ENCODE measurements at regions of chr7 and their contacts with region 1.

Region 1: GRCh38 chr7:8217200-8218068 is 44.5 kb downstream of the ICA1 start:
- DNase-seq: peak in 1 of 5 donors; percentile 33
- ATAC-seq: peak in 2 of 4 donors; percentile 37 to 45
- H3K4me3 ChIP-seq: no peak overlapping the region
- H3K27ac ChIP-seq: no peak overlapping the region
- H3K4me1 ChIP-seq: peaks cover 0 to 24% (median 7%) of the 10 kb centered on the region in 12 donors
- H3K27me3 ChIP-seq: no peaks in the 10 kb centered on the region
- CTCF ChIP-seq: peak; percentile 47 to 90 (median 78)
- POLR2A ChIP-seq: no peak

Region 2: GRCh38 chr7:7424151-7424873 is 793.1 kb before region 1 on chr7:
- intact Hi-C with region 1: loop called in 4 of 10 experiments (anchors 10 kb)
- DNase-seq: peak; percentile 41 to 58 (median 55)
- ATAC-seq: peak; percentile 58 to 94 (median 86)
- H3K4me3 ChIP-seq: peak overlapping the region; percentile 14 to 65 (median 50)
- H3K27ac ChIP-seq: peak overlapping the region in 1 of 12 donors; percentile 11
- H3K4me1 ChIP-seq: peaks cover 0 to 11% (median 0%) of the 10 kb centered on the region in 12 donors
- H3K27me3 ChIP-seq: no peaks in the 10 kb centered on the region
- CTCF ChIP-seq: peak; percentile 52 to 82 (median 70)
- POLR2A ChIP-seq: no peak

Region 3: GRCh38 chr7:7595451-7595850 is 622.0 kb before region 1 on chr7:
- intact Hi-C with region 1: loop called in 8 of 10 experiments (anchors 5 to 10 kb)
- DNase-seq: no peak
- ATAC-seq: no peak
- H3K4me3 ChIP-seq: no peak overlapping the region
- H3K27ac ChIP-seq: no peak overlapping the region
- H3K4me1 ChIP-seq: peaks cover 0 to 10% (median 0%) of the 10 kb centered on the region in 12 donors
- H3K27me3 ChIP-seq: no peaks in the 10 kb centered on the region
- CTCF ChIP-seq: peak; percentile 14 to 63 (median 32)
- POLR2A ChIP-seq: no peak

Region 4: DNA sequence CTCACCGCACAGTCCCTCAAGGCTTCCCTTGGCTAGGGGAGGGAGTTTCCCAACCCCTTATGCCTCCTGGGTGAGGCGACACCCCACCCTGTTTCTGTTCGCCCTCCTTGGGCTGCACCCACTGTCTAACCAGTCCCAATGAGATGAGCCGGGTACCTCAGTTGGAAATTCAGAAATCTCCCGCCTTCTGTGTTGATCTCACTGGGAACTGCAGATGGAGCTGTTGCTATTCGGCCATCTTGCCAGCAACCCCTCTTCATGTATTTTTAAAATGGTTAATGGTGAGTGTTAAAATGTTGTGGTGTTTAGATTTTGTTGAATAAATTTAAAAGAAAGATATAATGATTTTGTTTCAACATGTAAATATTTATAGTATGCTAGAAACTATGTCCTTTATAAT is 554.9 kb before region 1 on chr7:
- intact Hi-C with region 1: loop called in 3 of 10 experiments (anchors 10 kb)
- DNase-seq: no peak
- ATAC-seq: no peak
- H3K4me3 ChIP-seq: no peak overlapping the region
- H3K27ac ChIP-seq: no peak overlapping the region
- H3K4me1 ChIP-seq: peaks cover 0 to 5% (median 0%) of the 10 kb centered on the region in 12 donors
- H3K27me3 ChIP-seq: no peaks in the 10 kb centered on the region
- CTCF ChIP-seq: peak in 10 of 12 donors; percentile 6 to 50 (median 36)
- POLR2A ChIP-seq: no peak

Region 5: GRCh38 chr7:7681179-7681935 is 536.1 kb before region 1 on chr7:
- intact Hi-C with region 1: loop called in 5 of 10 experiments (anchors 5 to 10 kb)
- DNase-seq: peak in 2 of 5 donors; percentile 61
- ATAC-seq: peak in 3 of 4 donors; percentile 77 to 91 (median 89)
- H3K4me3 ChIP-seq: peak overlapping the region in 4 of 12 donors; percentile 12 to 34 (median 15)
- H3K27ac ChIP-seq: peak overlapping the region; percentile 3 to 69 (median 35)
- H3K4me1 ChIP-seq: peaks cover 0 to 30% (median 21%) of the 10 kb centered on the region in 12 donors
- H3K27me3 ChIP-seq: no peaks in the 10 kb centered on the region
- CTCF ChIP-seq: peak; percentile 47 to 82 (median 71)
- POLR2A ChIP-seq: no peak

Region 6: DNA sequence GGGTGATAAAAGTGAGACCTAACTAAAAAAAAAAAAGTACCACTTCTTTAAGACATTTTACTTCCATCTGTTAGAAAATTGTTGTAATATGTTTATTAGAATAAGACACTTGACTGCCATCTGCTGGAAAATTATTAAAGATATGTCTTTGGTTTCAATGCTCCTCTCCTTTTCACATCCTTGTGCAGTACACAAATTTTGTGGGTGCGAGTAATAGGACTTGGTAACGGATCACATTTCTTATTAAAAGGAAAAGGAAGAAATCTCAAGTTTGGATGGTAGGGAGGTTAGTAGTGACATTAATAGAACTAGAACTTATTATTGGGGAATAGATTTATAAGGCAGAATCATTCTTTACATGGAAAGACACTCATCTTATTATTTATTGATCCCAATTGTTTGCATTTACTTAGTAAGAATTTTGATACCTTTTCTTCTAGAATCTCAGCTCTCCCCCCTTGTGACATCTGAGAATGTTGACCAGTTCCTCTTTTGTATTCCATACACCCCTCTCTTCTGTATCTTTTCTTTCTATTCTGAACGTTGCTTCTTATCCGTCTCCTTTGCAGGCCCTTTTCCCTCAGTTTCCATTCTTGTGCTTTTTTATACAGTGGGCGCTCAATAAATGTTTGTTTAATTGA is 456.0 kb before region 1 on chr7:
- intact Hi-C with region 1: loop called in 5 of 10 experiments (anchors 5 to 10 kb)
- DNase-seq: no peak
- ATAC-seq: peak; percentile 33 to 66 (median 52)
- H3K4me3 ChIP-seq: peak overlapping the region in 10 of 12 donors; percentile 39 to 61 (median 52)
- H3K27ac ChIP-seq: peak overlapping the region in 11 of 12 donors; percentile 9 to 80 (median 68)
- H3K4me1 ChIP-seq: peaks cover 0 to 17% (median 8%) of the 10 kb centered on the region in 12 donors
- H3K27me3 ChIP-seq: no peaks in the 10 kb centered on the region
- CTCF ChIP-seq: peak; percentile 36 to 67 (median 54)
- POLR2A ChIP-seq: no peak

Region 7: GRCh38 chr7:7959979-7960670 is 257.3 kb before region 1 on chr7:
- intact Hi-C with region 1: no loop called
- DNase-seq: no peak
- ATAC-seq: no peak
- H3K4me3 ChIP-seq: no peak overlapping the region
- H3K27ac ChIP-seq: no peak overlapping the region
- H3K4me1 ChIP-seq: no peaks in the 10 kb centered on the region
- H3K27me3 ChIP-seq: no peaks in the 10 kb centered on the region
- CTCF ChIP-seq: no peak
- POLR2A ChIP-seq: no peak

Region 8: DNA sequence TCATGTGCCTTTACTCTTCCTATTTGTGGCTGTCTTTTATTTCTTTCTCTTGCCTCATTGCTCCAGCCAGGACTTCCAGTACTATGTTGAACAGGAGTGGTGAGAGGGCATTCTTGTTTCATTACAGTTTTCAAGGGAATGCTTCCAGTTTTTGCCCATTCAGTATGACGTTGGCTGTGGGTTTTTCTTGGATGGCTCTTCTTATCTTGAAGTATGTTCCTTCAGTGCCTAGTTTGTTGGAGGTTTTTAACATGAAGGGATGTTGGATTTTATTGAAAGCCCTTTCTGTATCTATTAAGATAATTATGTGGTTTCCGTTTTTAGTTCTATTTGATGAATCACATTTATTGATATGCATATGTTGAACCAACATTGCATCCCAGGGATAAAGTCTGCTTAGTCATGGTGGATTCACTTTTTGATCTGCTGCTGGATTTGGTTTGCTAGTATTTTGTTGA is 152.0 kb before region 1 on chr7:
- intact Hi-C with region 1: no loop called
- DNase-seq: no peak
- ATAC-seq: no peak
- H3K4me3 ChIP-seq: no peak overlapping the region
- H3K27ac ChIP-seq: no peak overlapping the region
- H3K4me1 ChIP-seq: peaks cover 0 to 14% (median 2%) of the 10 kb centered on the region in 12 donors
- H3K27me3 ChIP-seq: no peaks in the 10 kb centered on the region
- CTCF ChIP-seq: no peak
- POLR2A ChIP-seq: no peak

Region 9: GRCh38 chr7:8295638-8296361 is 78.4 kb after region 1 on chr7:
- intact Hi-C with region 1: loop called in 2 of 10 experiments (anchors 5 kb)
- DNase-seq: peak in 2 of 5 donors; percentile 29 to 40
- ATAC-seq: peak; percentile 64 to 97 (median 91)
- H3K4me3 ChIP-seq: no peak overlapping the region
- H3K27ac ChIP-seq: no peak overlapping the region
- H3K4me1 ChIP-seq: peaks cover 0 to 1% (median 0%) of the 10 kb centered on the region in 12 donors
- H3K27me3 ChIP-seq: no peaks in the 10 kb centered on the region
- CTCF ChIP-seq: peak; percentile 55 to 86 (median 76)
- POLR2A ChIP-seq: no peak

Measured in heart left ventricle (tissue), 16 donors.